HepG2 (cell line): ENCODE measurements at regions of chr11 and their contacts with region 1.

Region 1: GRCh38 chr11:62665075-62665598 is at the starts of genes C11orf98 and CSKMT:
- DNase-seq: peak; percentile 85
- ATAC-seq: peak; percentile 86
- H3K4me3 ChIP-seq: peak within 1 kb of the TSS; percentile 69 to 97 (median 91)
- H3K27ac ChIP-seq: peak within 1 kb of the TSS; percentile 84
- H3K4me1 ChIP-seq: peaks cover 47% of the 10 kb centered on the region
- H3K27me3 ChIP-seq: no peaks in the 10 kb centered on the region; a peak in 1 of 5 replicates
- CTCF ChIP-seq: no peak
- EP300 ChIP-seq: peak in 1 of 2 experiments; percentile 11; a peak in 2 of 4 replicates
- POLR2A ChIP-seq: peak; percentile 97 to 99
- RAD21 ChIP-seq: peak; percentile 55
- total RNA-seq, gene C11orf98: 91.8 and 109 TPM in 2 replicates
- total RNA-seq, gene CSKMT: 9.9 and 31.8 TPM in 2 replicates

Region 2: DNA sequence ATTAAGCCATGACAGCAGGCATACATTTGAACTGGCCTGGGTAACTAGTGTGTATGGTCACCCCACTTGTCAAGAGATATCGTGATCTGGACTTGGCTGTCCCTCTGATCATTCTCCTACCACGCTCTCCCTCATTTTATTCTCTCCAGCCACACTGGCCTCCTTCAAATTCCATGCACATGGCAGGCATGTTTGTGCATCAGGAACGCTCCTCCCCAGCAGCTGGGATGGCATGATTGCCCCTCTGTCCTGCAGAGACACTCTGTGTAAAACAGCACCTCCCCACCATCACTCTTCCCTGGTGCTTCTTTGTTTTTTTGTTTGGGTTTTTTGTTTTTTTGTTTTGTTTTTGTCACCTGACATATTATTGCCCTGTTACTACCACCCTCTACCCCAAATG is 277.8 kb before region 1 on chr11:
- CTCF ChIA-PET with region 1: no interaction called
- POLR2A ChIA-PET with region 1: no interaction called
- in situ Hi-C with region 1: no loop called
- intact Hi-C with region 1: no loop called
- DNase-seq: no peak
- ATAC-seq: no peak
- H3K4me3 ChIP-seq: no peak overlapping the region
- H3K27ac ChIP-seq: no peak overlapping the region
- H3K4me1 ChIP-seq: peaks cover 8% of the 10 kb centered on the region
- H3K27me3 ChIP-seq: no peaks in the 10 kb centered on the region
- CTCF ChIP-seq: no peak
- EP300 ChIP-seq: no peak
- POLR2A ChIP-seq: no peak
- RAD21 ChIP-seq: no peak

Region 3: GRCh38 chr11:62580959-62581715 is 84.0 kb before region 1 on chr11:
- CTCF ChIA-PET with region 1: no interaction called
- POLR2A ChIA-PET with region 1: no interaction called
- in situ Hi-C with region 1: no loop called
- intact Hi-C with region 1: no loop called
- DNase-seq: no peak
- ATAC-seq: no peak
- H3K4me3 ChIP-seq: no peak overlapping the region
- H3K27ac ChIP-seq: no peak overlapping the region
- H3K4me1 ChIP-seq: peaks cover 10% of the 10 kb centered on the region
- H3K27me3 ChIP-seq: no peaks in the 10 kb centered on the region
- CTCF ChIP-seq: no peak
- EP300 ChIP-seq: no peak
- POLR2A ChIP-seq: no peak
- RAD21 ChIP-seq: no peak

Region 4: DNA sequence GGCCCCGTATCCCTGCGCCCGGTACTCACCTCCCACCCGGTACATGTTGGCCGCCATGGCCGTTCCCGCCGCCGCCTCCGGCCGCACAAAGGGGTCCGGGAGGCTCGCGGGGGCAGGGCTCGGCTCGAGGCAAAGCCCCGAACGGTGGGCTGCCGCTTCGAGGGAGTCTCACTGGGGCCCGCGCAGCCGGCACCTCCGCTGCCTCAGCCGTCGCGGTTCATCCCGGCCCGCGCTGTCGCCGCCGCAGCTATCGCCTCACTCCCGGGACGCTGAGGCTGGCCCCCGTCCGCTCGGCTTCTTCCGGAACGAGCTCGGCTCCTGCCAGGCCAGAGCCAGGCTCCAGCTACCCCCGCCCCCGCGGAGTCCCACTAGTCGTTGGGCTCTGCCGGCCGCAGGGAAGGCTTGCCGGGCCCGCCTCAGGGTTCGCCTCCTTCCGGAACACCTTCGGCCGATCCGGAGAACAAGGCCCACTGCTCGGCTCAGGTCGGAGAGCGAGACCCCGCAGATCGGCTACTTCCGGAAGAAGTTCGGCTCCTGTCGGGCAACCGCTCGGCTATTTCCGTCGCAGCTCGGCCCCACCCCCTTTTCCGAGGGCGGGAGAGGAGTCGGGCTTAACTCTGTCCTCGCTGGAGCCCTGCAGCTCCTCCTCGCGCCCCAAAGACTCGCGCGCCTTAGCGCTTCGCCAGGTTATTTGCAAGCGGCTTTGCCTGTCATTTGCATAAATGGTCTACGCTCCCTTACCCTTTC is 63.6 kb before region 1 on chr11 and contains the start of gene MTA2:
- CTCF ChIA-PET with region 1: no interaction called
- POLR2A ChIA-PET with region 1: interaction called, 22 read pairs
- in situ Hi-C with region 1: no loop called
- intact Hi-C with region 1: no loop called
- DNase-seq: peak; percentile 94
- ATAC-seq: peak; percentile 93
- H3K4me3 ChIP-seq: peak within 1 kb of the TSS; percentile 91 to 94 (median 94)
- H3K27ac ChIP-seq: peak within 1 kb of the TSS; percentile 88
- H3K4me1 ChIP-seq: peaks cover 43% of the 10 kb centered on the region
- H3K27me3 ChIP-seq: no peaks in the 10 kb centered on the region; a peak in 1 of 5 replicates
- CTCF ChIP-seq: 0 out of 2 replicates have a peak, but pooled peaks have one; percentile 2
- EP300 ChIP-seq: no peak
- POLR2A ChIP-seq: peak in 1 of 2 experiments; percentile 72; a peak in 2 of 4 replicates
- RAD21 ChIP-seq: no peak
- total RNA-seq, gene MTA2: 58.1 and 70.0 TPM in 2 replicates

Region 5: DNA sequence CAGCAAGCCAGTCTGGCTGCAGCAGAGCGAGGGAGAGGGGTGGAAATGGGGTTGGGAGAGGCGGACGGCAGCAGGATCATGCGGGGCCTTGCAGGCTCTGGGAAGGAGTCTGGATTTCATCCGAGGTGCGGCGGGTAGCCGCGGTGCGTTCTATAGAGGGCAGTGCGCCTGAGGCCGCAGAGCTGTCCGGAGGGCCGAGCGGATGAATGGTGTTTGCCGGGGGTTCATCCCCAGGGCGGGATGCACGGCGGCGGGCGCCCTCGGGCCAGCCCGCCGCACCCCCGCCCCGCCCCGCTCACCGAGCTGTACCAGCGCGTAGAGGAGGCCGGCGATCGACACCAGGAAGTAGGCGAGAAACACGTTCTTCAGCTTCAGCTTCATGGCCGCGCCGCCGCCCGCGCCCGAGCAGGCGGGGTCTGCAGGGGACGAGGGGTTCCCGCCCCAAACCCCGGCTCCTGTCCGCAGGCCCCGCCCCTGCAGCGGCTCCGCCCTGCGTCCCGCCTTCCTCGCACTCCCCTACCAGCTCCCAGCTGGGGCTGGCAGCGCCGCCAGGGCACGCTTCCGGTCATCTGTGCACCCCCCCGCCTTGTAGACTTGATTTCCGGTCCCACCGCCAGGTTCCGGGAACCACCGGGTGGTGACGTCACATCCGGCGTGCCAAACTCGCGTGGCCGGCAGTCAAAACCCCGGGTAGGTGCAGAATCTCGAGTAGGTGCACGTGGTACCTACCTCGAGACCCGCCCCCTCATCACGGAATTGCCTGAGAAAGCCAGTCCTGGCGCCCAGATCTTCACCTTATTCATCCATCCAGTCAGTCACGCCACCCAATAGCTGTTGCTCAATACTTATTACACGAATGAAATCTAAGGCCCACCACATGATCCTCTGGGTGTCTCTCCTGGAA is 43.3 kb before region 1 on chr11 and contains the start of gene B3GAT3:
- CTCF ChIA-PET with region 1: no interaction called
- POLR2A ChIA-PET with region 1: interaction called, 52 read pairs
- in situ Hi-C with region 1: no loop called
- intact Hi-C with region 1: no loop called
- DNase-seq: peak; percentile 95
- ATAC-seq: peak; percentile 95
- H3K4me3 ChIP-seq: peak within 1 kb of the TSS; percentile 74 to 90 (median 81)
- H3K27ac ChIP-seq: peak within 1 kb of the TSS; percentile 72
- H3K4me1 ChIP-seq: peaks cover 21% of the 10 kb centered on the region
- H3K27me3 ChIP-seq: no peaks in the 10 kb centered on the region; a peak in 1 of 5 replicates
- CTCF ChIP-seq: peak; percentile 39
- EP300 ChIP-seq: 0 out of 4 replicates have a peak, but pooled peaks of 1 of the 2 experiments have one; percentile 18
- POLR2A ChIP-seq: peak; percentile 42 to 89
- RAD21 ChIP-seq: peak; percentile 20
- total RNA-seq, gene B3GAT3: 8.4 and 21.3 TPM in 2 replicates

Region 6: DNA sequence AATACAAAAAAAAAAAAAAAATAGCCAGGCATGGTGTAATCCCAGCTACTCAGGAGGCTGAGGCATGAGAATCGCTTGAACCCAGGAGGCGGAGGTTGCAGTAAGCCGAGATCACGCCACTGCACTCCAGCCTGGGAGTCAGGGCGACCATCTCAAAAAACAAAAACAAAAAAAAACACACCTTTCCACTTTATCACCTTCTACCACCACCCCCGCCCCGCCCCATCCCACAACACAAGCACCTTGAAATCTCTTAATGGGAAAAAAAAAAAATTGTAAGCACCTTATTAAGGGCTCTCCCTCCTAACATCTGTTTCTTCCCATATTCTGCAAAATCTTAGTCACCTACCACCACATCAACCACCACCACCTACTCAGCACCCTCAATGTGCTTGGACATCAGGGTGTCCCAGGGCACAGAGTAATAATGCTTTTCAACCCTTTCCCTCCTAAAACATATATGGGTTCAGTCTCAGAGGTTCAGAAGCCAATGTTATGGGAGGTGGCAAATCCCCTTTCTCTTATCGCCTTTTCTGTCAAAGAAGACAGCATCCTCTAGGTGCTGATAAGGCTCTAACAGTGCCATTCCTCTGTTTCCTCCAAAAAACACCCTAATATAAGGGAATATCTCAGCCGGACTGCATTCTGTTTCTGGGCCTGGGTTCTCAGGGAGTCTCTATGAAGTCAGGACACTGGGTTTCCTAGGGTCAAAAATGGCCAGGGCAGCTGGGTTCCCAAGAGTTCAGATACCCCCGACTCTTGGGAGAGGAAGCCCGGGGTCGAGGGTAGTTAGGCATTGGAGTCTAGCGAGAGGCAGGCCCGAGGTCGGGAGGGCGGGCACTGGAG is 12.8 kb before region 1 on chr11:
- CTCF ChIA-PET with region 1: no interaction called
- POLR2A ChIA-PET with region 1: interaction called, 186 read pairs
- in situ Hi-C with region 1: no loop called
- intact Hi-C with region 1: no loop called
- DNase-seq: no peak
- ATAC-seq: peak; percentile 16
- H3K4me3 ChIP-seq: peak overlapping the region; percentile 88 to 92 (median 89)
- H3K27ac ChIP-seq: peak overlapping the region; percentile 84
- H3K4me1 ChIP-seq: peaks cover 39% of the 10 kb centered on the region
- H3K27me3 ChIP-seq: no peaks in the 10 kb centered on the region
- CTCF ChIP-seq: no peak
- EP300 ChIP-seq: no peak
- POLR2A ChIP-seq: no peak
- RAD21 ChIP-seq: no peak

Region 7: DNA sequence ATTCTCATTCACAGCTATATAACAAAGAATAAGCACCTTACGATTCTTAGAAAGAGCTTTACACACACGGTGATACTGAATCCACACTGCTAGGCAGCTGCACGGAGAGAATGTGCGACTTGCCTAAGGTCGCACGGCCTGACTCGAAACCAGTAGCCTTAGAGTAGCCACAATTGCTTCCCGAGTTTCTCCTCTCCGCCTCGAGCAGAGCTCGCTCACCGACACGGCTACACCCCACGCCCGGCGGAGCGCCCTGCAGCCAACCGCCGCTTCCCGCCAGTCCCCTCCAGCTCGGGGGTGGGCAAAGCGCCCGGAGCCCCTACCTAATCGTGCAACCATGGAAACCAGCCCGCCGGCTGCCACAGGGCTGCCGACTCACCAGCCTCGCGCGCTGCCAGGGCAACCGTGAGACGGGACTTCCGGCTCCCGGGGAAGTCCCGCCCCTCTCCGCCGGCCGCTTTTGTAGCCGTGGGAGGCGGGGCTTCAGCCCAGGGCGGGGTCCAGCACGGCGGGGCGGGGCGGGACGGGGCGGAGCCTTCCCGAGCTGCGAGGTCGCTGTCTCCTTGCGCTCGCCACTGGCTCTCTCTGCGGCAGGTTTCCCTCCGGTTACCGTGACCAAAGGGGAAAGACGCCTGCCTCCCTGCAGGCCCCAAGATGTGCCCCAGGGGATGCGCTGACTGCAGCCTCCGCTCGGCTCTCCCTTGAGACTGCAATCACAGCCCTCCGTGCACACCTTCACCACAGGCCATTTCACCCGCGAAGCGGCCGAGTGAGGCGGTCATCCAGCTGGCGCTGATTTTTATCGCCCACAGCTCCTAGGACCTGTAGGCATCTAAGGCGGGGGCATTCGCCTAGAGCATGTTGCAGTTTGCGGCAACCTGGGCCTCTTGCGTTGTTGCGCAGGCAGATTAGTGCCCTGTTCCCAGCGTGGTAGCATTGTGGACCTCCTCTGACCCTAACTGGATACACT is 41.0 kb after region 1 on chr11:
- CTCF ChIA-PET with region 1: no interaction called
- POLR2A ChIA-PET with region 1: interaction called, 14 read pairs
- in situ Hi-C with region 1: no loop called
- intact Hi-C with region 1: no loop called
- DNase-seq: peak; percentile 83
- ATAC-seq: peak; percentile 93
- H3K4me3 ChIP-seq: peak overlapping the region; percentile 70 to 86 (median 80)
- H3K27ac ChIP-seq: peak overlapping the region; percentile 69
- H3K4me1 ChIP-seq: peaks cover 18% of the 10 kb centered on the region
- H3K27me3 ChIP-seq: no peaks in the 10 kb centered on the region
- CTCF ChIP-seq: no peak
- EP300 ChIP-seq: no peak
- POLR2A ChIP-seq: peak in 1 of 2 experiments; percentile 74; a peak in 2 of 4 replicates
- RAD21 ChIP-seq: no peak

Region 8: DNA sequence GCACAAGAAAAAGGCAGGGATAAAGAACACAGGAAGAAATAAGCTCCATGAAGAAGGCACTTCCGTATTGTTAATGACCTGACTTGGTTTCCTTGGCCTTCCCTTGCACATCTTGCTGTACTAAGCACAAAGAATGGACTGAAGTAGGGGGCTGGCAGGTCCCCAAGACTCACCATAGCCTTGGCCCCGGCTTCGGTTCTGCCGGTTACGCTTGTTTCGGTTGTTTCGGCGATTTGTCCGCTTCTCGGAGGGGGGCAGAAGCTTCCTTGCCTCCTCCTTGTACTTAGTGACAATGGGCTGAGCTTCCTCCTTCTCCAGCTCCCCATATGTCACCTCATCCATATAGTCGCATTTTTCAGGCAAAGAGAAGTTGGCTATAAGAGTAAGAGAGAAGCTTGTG is 51.7 kb after region 1 on chr11:
- CTCF ChIA-PET with region 1: no interaction called
- POLR2A ChIA-PET with region 1: no interaction called
- in situ Hi-C with region 1: no loop called
- intact Hi-C with region 1: no loop called
- DNase-seq: no peak
- ATAC-seq: no peak
- H3K4me3 ChIP-seq: no peak overlapping the region
- H3K27ac ChIP-seq: no peak overlapping the region
- H3K4me1 ChIP-seq: peaks cover 5% of the 10 kb centered on the region
- H3K27me3 ChIP-seq: no peaks in the 10 kb centered on the region
- CTCF ChIP-seq: no peak
- EP300 ChIP-seq: no peak
- POLR2A ChIP-seq: no peak
- RAD21 ChIP-seq: no peak

Region 9: GRCh38 chr11:62787005-62787759 is 122.0 kb after region 1 on chr11 and contains the start of gene TMEM179B:
- CTCF ChIA-PET with region 1: no interaction called
- POLR2A ChIA-PET with region 1: interaction called, 10 read pairs
- in situ Hi-C with region 1: no loop called
- intact Hi-C with region 1: no loop called
- DNase-seq: peak; percentile 96
- ATAC-seq: peak; percentile 77
- H3K4me3 ChIP-seq: peak within 1 kb of the TSS; percentile 65 to 88 (median 81)
- H3K27ac ChIP-seq: peak within 1 kb of the TSS; percentile 79
- H3K4me1 ChIP-seq: peaks cover 45% of the 10 kb centered on the region
- H3K27me3 ChIP-seq: no peaks in the 10 kb centered on the region; a peak in 1 of 5 replicates
- CTCF ChIP-seq: peak; percentile 79
- EP300 ChIP-seq: no peak; a peak in 1 of 4 replicates
- POLR2A ChIP-seq: peak; percentile 91 to 98
- RAD21 ChIP-seq: no peak
- total RNA-seq, gene TMEM179B: 11.4 and 24.8 TPM in 2 replicates

Region 10: DNA sequence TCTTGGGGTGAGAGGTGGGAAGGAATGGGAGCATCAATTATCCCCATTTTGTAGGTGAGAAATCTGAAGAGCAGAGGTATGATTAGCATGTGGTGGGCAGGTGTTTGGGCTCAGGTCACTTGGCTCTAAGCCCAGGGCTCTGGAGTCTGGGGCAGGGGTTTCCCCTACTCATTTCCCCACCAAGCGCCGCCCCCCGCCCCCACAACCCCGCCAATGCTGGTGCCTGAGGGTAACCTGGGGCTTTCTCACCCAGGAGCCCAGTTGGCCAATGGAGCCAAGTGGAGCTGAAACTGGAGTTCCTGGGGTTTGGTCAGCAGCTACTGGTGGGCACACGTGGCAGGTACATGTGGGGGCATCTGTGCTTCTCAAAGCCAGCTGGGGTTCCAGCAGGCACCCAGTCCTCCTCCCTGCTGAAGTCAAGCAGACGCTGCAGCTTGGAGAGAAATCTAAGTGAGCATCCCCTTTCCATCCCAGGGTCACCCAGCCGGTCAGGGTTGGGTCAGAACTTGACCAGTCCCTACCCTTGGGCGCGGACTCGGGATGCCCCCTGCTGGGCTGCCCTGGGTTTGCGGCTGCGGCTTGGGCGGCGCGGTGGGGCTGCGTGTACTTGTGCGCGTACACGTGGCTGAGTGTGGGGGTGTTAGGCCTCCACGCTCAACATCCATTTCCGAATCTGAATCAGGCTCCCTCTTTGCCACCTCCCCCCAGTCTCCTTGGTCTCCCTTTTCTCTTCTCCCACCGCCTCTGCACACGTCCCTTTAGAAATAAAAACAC is 257.7 kb after region 1 on chr11:
- CTCF ChIA-PET with region 1: no interaction called
- POLR2A ChIA-PET with region 1: no interaction called
- in situ Hi-C with region 1: no loop called
- intact Hi-C with region 1: no loop called
- DNase-seq: no peak
- ATAC-seq: no peak
- H3K4me3 ChIP-seq: no peak overlapping the region
- H3K27ac ChIP-seq: no peak overlapping the region
- H3K4me1 ChIP-seq: no peaks in the 10 kb centered on the region
- H3K27me3 ChIP-seq: peaks cover 10 to 33% of the 10 kb centered on the region in 2 experiments; a peak in 4 of 5 replicates
- CTCF ChIP-seq: peak; percentile 34; the same call in 1 of the 2 replicates
- EP300 ChIP-seq: no peak
- POLR2A ChIP-seq: no peak
- RAD21 ChIP-seq: no peak